ENCODE measurements at regions of chr3 and their contacts with region 1.

Region 1: DNA sequence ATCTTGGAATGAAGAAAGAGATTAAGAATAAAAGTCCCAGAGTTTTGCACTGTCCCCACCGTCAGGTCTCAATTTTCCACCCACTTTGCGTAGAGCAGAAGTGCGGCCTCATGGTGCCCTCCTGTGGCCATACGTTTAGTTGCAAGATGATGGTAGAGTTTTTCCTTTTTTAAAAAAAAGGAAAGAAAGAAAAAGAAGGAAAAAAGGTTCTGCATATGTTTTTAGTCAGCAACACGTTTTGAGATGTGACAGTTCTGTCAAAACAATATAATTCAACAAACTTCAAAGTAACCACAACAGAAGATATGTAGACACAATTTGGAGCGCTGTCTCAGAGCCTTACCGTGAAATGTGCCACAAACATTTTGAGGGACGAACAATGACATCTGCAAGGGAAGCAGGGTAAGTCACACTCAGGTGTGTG is 24.6 kb downstream of the EBLN2 start:
- DNase-seq: peak in 4 of 5 donors; percentile 33 to 41 (median 39)
- H3K4me3 ChIP-seq: no peak overlapping the region
- H3K4me3 Mint-ChIP-seq: peak overlapping the region in 6 of 8 donors; percentile 39 to 79 (median 62)
- H3K27ac ChIP-seq: no peak overlapping the region
- H3K27ac Mint-ChIP-seq: peak overlapping the region in 3 of 7 donors; percentile 10 to 68 (median 48)
- H3K4me1 ChIP-seq: peaks cover 6% of the 10 kb centered on the region
- H3K4me1 Mint-ChIP-seq: peaks cover 5 to 8% (median 5%) of the 10 kb centered on the region in 4 donors
- H3K27me3 ChIP-seq: no peaks in the 10 kb centered on the region
- H3K27me3 Mint-ChIP-seq: no peaks in the 10 kb centered on the region

Region 2: DNA sequence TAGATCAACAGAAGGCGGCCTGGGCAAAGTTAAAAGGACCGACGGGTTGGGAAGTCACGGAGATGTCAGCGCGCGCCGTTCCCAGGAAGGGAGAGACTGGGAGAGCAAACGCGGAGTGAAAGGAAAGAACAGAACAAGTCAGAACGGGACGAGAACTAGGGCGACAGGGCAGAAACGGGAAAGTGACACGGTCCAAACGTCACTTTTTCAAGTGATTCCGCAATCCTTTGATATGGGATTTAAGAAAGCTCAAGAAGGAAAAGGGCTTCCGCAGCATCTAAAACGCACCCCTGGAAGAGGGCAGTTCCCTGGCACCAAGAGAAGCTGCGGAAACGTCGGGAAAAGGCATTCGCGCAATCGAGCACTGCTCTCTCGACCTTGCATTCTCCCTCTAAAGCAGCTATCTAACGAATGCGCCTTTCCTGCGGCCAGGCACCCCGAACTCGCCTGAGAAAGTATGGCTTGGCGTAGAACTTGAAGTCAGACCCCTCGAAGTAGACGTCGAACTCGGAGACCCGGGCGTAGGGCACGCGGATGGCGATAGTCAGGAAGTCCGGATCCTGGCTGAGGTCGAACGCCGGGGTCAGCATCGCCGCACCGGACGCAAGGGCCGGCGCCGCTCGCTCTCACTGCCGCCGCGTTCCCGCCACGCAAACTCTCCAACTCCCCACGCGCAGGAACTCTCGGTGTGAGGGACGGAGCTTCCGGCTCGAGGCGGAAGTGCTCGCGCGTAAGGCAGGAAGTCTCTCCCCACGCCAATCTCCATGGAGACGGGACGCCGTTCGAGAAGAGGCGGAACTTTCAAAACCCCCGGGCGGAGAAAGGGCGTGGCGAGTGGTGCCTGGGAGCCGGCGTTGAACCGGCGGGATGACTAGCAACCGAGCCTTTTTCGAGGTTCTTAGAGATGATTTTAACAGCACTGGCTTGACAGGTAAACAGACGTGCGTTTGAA is 238.1 kb before region 1 on chr3 and contains the start of gene SHQ1:
- CTCF ChIA-PET with region 1: interaction called, 25 read pairs
- POLR2A ChIA-PET with region 1: no interaction called
- intact Hi-C with region 1: loop called (anchors 1 kb)
- DNase-seq: peak; percentile 91 to 96 (median 92)
- H3K4me3 ChIP-seq: peak within 1 kb of the TSS; percentile 82 to 97
- H3K4me3 Mint-ChIP-seq: peak within 1 kb of the TSS; percentile 94 to 97 (median 96)
- H3K27ac ChIP-seq: peak within 1 kb of the TSS; percentile 61
- H3K27ac Mint-ChIP-seq: peak within 1 kb of the TSS; percentile 78 to 95 (median 93)
- H3K4me1 ChIP-seq: peaks cover 47% of the 10 kb centered on the region
- H3K4me1 Mint-ChIP-seq: peaks cover 38 to 60% (median 48%) of the 10 kb centered on the region in 4 donors
- H3K27me3 ChIP-seq: no peaks in the 10 kb centered on the region
- H3K27me3 Mint-ChIP-seq: peaks cover 0 to 2% of the 10 kb centered on the region in 2 donors
- total RNA-seq, gene SHQ1: 28.7 to 31.2 TPM

Region 3: GRCh38 chr3:72938471-72939265 is 147.4 kb before region 1 on chr3:
- CTCF ChIA-PET with region 1: interaction called, 25 read pairs
- POLR2A ChIA-PET with region 1: interaction called, 4 read pairs
- intact Hi-C with region 1: loop called (anchors 1 kb)
- DNase-seq: peak; percentile 60 to 71 (median 63)
- H3K4me3 ChIP-seq: no peak overlapping the region
- H3K4me3 Mint-ChIP-seq: no peak overlapping the region
- H3K27ac ChIP-seq: no peak overlapping the region
- H3K27ac Mint-ChIP-seq: peak overlapping the region in 1 of 7 donors; percentile 35
- H3K4me1 ChIP-seq: no peaks in the 10 kb centered on the region
- H3K4me1 Mint-ChIP-seq: peaks cover 0 to 2% (median 0%) of the 10 kb centered on the region in 4 donors
- H3K27me3 ChIP-seq: no peaks in the 10 kb centered on the region
- H3K27me3 Mint-ChIP-seq: peaks cover 0 to 8% of the 10 kb centered on the region in 2 donors

Region 4: DNA sequence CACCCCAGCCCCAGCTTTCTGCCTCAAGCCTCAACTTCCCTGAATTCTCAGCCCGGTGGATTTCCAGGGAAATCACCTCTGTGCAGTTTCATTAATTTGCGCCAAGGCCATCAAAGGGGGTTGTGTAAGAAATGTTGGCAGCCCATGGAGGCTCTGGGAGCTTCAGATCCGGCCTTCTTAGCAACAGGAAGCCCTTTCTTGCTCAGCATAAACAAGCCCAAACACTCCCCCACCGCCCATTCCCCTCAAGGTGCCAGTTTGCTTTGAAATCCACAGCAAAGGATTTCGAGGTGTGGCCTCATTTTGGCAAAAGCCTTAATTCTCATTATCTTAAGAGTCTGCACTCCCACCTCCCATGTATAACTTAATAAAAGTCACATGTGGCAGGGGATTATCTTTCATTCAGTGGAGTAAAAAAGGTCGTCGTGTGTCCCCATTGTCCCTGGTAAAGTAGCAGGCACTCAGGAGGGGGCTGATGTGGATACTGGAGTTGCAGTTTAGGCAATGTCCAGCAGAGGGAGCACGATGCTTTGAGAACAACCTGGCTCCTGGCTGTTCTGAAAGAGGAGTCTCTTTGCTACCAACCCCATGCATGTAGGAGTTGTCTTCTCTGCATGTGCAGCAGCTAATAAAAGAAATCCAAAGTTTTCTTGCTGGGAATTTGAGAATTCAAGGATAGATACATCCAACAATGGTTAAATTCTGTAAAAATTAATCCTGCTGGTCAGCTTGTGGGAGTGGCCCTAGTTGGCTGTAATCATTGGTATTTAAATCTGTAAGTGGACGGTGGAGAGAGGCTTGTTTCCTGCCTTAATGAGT is 14.9 kb after region 1 on chr3:
- CTCF ChIA-PET with region 1: interaction called, 18 read pairs
- POLR2A ChIA-PET with region 1: no interaction called
- intact Hi-C with region 1: no loop called
- DNase-seq: peak; percentile 53 to 65 (median 61)
- H3K4me3 ChIP-seq: no peak overlapping the region
- H3K4me3 Mint-ChIP-seq: no peak overlapping the region
- H3K27ac ChIP-seq: no peak overlapping the region
- H3K27ac Mint-ChIP-seq: no peak overlapping the region
- H3K4me1 ChIP-seq: no peaks in the 10 kb centered on the region
- H3K4me1 Mint-ChIP-seq: peaks cover 0 to 7% (median 3%) of the 10 kb centered on the region in 4 donors
- H3K27me3 ChIP-seq: no peaks in the 10 kb centered on the region
- H3K27me3 Mint-ChIP-seq: peaks cover 1 to 6% of the 10 kb centered on the region in 2 donors

Region 5: DNA sequence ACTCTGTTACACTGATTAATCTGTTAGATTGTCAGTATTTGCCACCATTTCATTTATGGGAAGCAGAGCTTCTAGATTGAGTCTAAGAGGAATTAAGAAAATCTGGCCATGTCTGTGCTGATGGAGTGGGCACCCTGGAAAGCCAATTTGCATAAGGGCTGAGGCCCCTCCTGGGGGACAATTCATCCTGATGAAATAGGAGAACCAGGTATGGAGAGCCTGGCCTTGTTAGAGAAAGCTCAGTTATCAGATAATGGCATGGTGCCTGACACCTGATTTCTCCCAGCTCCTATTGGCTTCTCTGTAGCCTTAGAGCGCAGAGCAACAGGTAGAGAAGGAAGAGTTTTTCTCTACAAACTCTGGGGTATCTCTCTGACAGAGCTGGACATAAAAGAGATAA is 89.6 kb after region 1 on chr3:
- CTCF ChIA-PET with region 1: no interaction called
- POLR2A ChIA-PET with region 1: no interaction called
- intact Hi-C with region 1: no loop called
- DNase-seq: no peak
- H3K4me3 ChIP-seq: no peak overlapping the region
- H3K4me3 Mint-ChIP-seq: no peak overlapping the region
- H3K27ac ChIP-seq: no peak overlapping the region
- H3K27ac Mint-ChIP-seq: no peak overlapping the region
- H3K4me1 ChIP-seq: no peaks in the 10 kb centered on the region
- H3K4me1 Mint-ChIP-seq: no peaks in the 10 kb centered on the region
- H3K27me3 ChIP-seq: no peaks in the 10 kb centered on the region
- H3K27me3 Mint-ChIP-seq: peaks cover 0 to 6% of the 10 kb centered on the region in 2 donors

Measured in CD4-positive, alpha-beta memory T cell (primary cell).